ENCODE measurements at regions of chr12 and their contacts with region 1.

Region 1: DNA sequence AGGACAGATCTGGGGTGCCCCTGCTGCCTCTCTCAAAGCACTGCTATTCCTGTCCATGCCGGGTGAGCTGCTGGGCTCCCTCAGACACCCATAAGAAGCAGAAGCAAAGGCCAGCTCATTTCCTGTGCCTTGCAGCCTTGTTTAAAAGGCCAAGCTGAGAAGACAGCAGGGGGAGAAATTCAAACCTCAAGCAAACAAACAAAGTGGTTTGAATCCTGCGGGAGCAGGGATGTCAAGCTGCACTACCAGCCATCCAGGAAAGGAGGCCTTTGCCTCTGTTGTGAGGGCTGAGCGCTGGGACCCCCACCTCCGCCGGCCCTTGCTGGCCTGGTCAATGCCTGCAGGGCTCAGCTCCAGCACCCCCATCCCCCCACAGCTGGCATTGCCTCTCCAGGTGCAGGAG is 176.5 kb downstream of the PIWIL1 start:
- DNase-seq: no peak
- H3K4me3 ChIP-seq: no peak overlapping the region
- H3K27ac ChIP-seq: no peak overlapping the region
- H3K4me1 ChIP-seq: no peaks in the 10 kb centered on the region
- H3K27me3 ChIP-seq: no peaks in the 10 kb centered on the region
- CTCF ChIP-seq: no peak
- EP300 ChIP-seq: no peak
- POLR2A ChIP-seq: no peak

Region 2: DNA sequence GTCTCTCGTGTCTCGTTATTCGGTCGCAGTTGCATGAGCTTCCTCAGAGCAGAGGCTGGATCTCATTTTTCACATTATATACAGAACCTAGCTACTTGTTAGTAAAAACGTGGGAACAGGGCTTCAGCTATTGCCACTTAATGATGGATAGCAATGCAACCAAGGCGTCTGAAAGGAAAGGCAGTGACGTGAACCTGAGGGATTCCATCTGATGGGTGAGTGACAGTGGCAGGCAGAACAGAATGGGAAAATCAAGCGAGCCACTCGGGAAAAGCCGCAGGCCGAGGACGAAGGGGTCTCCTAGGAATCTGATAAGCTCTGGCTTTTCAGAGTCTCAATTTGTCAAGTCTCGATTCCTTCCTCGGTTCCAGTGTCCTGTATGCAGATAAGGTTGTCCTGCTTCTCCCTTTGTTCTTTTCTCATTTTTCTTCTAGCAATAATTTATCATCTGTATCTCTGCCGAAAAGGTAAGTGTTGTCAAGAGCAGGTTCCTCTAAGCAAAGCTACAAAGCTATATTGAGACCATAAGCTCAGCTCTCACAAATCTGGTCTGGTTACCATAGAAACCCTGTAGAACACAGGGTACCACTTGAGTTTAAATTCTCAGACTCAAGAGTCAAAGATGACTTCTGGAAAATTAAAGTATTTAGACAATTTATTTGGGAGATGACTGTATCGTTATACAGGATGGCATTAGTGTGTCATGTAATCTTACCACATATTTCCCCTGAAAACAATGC is 1244.2 kb before region 1 on chr12:
- in situ Hi-C with region 1: no loop called
- intact Hi-C with region 1: no loop called
- DNase-seq: no peak
- H3K4me3 ChIP-seq: no peak overlapping the region
- H3K27ac ChIP-seq: no peak overlapping the region
- H3K4me1 ChIP-seq: no peaks in the 10 kb centered on the region
- H3K27me3 ChIP-seq: no peaks in the 10 kb centered on the region
- CTCF ChIP-seq: no peak
- EP300 ChIP-seq: no peak
- POLR2A ChIP-seq: no peak

Region 3: DNA sequence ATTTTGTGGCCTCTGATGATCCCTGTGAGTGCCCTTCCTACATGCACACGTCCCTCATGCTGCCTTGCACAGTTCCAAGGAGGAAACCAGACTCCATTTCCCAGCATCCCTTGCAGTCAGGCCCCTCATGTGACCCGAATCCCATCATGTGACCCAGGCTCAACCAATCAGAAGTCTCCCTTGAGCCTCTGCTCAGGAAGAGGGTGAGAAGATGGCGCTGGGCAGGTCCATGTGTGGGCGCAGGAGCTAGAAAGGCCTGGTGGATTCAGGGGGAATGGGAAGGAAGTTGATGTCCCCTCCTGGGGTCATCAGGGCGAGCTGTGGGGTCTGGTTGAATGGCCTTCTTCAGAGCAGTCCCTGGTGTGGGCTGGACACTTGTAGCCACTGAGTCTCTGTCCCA is 680.0 kb after region 1 on chr12:
- in situ Hi-C with region 1: no loop called
- intact Hi-C with region 1: loop called (anchors 5 kb)
- DNase-seq: no peak
- H3K4me3 ChIP-seq: no peak overlapping the region
- H3K27ac ChIP-seq: no peak overlapping the region
- H3K4me1 ChIP-seq: no peaks in the 10 kb centered on the region
- H3K27me3 ChIP-seq: no peaks in the 10 kb centered on the region
- CTCF ChIP-seq: no peak
- EP300 ChIP-seq: no peak
- POLR2A ChIP-seq: no peak

Measured in transverse colon (tissue), 4 donors.